ENCODE measurements at regions of chr3 and their contacts with region 1.

Region 1: DNA sequence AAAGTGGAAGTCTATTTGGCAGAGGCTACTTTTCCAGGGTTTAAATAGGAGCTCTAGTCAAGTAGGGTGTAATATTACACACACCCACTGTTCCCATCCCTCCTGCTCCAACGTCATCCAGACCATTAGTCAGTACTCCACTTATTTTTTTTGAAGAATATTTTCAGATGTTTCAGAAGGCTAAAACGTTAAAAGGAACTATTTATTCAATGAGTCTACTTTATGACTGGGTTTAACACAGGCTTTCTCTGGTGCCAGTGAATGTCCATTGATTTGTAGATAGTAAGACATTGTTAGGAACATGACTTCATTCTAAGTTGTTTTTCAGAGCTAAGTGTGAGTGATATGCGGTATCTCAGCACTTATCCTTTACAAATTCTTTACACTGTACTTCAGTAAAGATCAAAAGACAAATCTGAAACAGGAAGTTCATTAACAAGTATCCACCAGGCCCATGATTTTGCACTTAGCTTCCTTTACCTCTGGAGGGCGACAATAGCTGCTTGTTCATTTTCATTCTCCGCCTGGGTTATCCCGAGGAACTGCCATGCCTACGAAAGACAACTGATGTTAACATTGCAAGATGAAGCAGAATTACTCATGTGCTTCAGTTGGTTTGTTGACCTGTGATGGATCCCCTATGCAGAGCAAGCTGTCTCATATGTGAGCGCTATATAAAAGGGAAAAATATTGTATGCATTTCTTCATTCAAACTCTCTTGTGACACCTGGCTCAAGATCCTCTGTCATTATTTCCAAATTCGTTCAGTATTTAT is 158.7 kb downstream of the USP13 start:
- DNase-seq: peak in 1 of 2 experiments; percentile 21
- H3K4me3 ChIP-seq: no peak overlapping the region
- H3K27ac ChIP-seq: no peak overlapping the region
- H3K4me1 ChIP-seq: no peaks in the 10 kb centered on the region
- H3K27me3 ChIP-seq: no peaks in the 10 kb centered on the region
- CTCF ChIP-seq: peak; percentile 5 to 84 (median 79)
- EP300 ChIP-seq: no peak
- POLR2A ChIP-seq: no peak
- RAD21 ChIP-seq: peak; percentile 98 to 99

Region 2: DNA sequence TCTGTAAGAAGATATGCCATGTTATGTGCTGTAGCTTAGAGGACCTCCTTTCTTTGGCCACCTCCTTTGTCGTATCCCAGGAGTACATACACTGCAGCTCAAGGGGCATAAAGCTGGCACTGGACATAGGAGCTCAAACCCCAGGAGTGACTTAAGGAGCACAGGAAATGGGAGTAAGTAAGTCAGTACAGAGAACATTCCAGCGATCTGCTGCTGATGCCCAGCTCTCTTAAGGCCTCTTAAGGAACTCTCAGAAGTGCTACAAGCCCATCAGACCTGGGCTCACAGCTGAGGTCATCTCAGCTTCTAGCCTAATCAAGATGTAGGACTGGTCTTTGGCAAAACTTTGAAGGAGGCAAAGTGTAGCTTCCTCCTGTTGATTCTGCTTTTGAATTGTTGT is 270.4 kb before region 1 on chr3:
- CTCF ChIA-PET with region 1: no interaction called
- POLR2A ChIA-PET with region 1: no interaction called
- DNase-seq: no peak
- H3K4me3 ChIP-seq: no peak overlapping the region
- H3K27ac ChIP-seq: no peak overlapping the region
- H3K4me1 ChIP-seq: no peaks in the 10 kb centered on the region
- H3K27me3 ChIP-seq: no peaks in the 10 kb centered on the region
- CTCF ChIP-seq: no peak
- EP300 ChIP-seq: no peak
- POLR2A ChIP-seq: no peak
- RAD21 ChIP-seq: no peak

Region 3: DNA sequence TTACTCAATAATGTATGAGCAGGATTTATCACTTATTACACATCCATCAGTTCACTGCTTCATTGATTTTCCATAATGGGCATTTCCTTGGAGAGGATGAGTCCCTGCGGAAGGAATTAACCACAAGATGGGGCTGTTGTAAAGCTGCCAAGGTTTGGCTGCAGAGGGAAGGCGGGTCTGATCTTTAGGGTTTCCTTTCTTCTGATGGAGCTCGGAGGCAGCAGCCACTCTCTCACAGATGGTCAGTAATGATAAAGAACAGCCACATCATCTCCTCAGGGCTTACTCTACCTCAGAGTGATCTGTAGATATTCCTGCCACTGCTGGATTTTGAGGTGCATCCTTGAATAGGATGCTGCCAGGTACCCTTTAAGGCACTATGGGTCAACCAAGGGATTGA is 43.4 kb before region 1 on chr3:
- CTCF ChIA-PET with region 1: interaction called, 16 read pairs
- POLR2A ChIA-PET with region 1: no interaction called
- DNase-seq: peak in 1 of 2 experiments; percentile 58
- H3K4me3 ChIP-seq: no peak overlapping the region
- H3K27ac ChIP-seq: no peak overlapping the region
- H3K4me1 ChIP-seq: peaks cover 1 to 13% (median 3%) of the 10 kb centered on the region in 4 experiments; a peak in 6 of 7 replicates
- H3K27me3 ChIP-seq: no peaks in the 10 kb centered on the region
- CTCF ChIP-seq: peak; percentile 59 to 84 (median 72)
- EP300 ChIP-seq: no peak
- POLR2A ChIP-seq: no peak
- RAD21 ChIP-seq: peak; percentile 84 to 87

Region 4: GRCh38 chr3:179801263-179801662 is 10.2 kb before region 1 on chr3:
- CTCF ChIA-PET with region 1: interaction called, 29 read pairs
- POLR2A ChIA-PET with region 1: interaction called, 3 read pairs
- DNase-seq: no peak
- H3K4me3 ChIP-seq: no peak overlapping the region
- H3K27ac ChIP-seq: no peak overlapping the region
- H3K4me1 ChIP-seq: no peaks in the 10 kb centered on the region
- H3K27me3 ChIP-seq: no peaks in the 10 kb centered on the region
- CTCF ChIP-seq: no peak
- EP300 ChIP-seq: no peak
- POLR2A ChIP-seq: no peak
- RAD21 ChIP-seq: no peak

Region 5: DNA sequence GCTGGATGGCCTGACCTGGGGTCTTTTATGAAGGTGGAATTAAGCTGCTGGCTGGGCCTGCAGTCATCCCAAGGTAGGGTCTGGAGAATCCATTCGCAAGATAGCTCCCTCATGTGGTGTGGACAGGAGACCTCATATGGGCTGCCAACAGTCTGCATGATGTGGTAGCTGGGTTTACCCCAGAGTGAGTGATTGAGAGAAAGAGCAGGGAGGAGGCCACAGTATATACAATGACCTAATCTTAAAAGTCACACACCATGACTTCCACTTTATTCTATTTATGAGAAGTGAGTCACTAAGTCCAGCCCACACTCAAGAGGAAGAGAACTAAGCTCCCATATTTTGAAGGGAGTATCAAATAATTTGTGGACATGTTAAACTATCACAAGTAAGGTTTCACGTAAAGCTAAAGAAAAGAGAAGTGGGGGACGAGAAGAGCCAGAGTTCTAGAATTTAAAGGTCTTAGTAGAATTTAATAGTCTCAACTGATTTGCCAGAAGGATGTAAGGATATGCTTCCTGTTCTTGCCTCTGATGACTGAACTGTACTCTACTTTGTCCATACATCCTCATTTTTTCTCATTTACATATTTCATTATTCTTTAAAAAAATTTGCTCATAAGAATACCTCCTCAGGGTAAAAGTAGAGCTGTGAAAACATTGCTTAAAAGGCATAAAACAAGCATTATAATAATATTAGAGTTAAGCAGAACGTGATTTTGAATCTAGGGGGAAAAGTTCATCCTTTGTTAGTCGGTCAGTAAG is 40.8 kb after region 1 on chr3:
- CTCF ChIA-PET with region 1: interaction called, 23 read pairs
- POLR2A ChIA-PET with region 1: no interaction called
- DNase-seq: no peak
- H3K4me3 ChIP-seq: no peak overlapping the region
- H3K27ac ChIP-seq: no peak overlapping the region
- H3K4me1 ChIP-seq: no peaks in the 10 kb centered on the region
- H3K27me3 ChIP-seq: no peaks in the 10 kb centered on the region
- CTCF ChIP-seq: peak; percentile 57 to 60 (median 57)
- EP300 ChIP-seq: no peak
- POLR2A ChIP-seq: no peak
- RAD21 ChIP-seq: peak; percentile 51 to 61

Region 6: DNA sequence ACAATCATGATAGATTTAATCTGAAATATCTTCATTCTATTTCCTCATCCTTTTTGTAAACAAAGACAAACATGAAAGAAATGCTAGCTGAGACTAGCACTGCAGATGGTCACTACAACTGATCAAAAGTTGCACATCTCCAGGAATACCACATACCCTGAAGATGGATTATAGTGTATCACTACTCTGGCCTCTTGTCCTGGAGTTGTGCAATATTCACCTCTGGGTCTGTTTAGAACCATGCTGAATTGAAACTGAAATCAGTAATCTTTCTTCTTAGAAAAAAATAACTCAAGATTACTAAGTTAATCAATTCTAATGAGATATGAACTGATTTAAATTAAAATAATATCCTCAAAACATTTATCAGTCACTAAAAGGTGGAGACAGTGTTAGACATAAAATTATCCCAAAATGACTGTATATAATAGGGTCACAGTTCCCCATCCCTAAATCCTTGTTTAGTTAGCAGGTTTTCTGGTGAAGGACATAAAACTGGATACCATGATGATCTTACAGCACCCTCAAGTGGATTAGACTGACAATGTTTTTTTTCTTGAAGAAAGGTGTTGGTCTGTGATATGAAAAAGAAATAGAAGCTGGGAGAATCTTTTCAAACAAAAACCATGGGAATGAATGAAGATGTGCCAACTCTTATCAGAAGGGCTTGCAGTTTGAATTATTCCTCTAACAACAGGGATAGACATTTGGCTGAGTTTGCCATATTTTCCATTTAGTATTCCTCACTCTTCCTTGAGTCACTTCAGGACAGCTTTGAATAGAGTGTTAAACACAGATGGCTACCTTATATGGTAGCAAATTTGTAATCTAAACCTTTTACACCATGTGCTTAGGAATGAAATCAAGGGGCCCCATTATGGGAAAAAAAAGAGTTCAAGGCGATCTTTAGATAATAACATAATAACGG is 783.4 kb after region 1 on chr3:
- CTCF ChIA-PET with region 1: interaction called, 12 read pairs
- POLR2A ChIA-PET with region 1: no interaction called
- DNase-seq: no peak
- H3K4me3 ChIP-seq: no peak overlapping the region
- H3K27ac ChIP-seq: no peak overlapping the region
- H3K4me1 ChIP-seq: no peaks in the 10 kb centered on the region
- H3K27me3 ChIP-seq: no peaks in the 10 kb centered on the region
- CTCF ChIP-seq: peak in 2 of 3 experiments; percentile 40 to 44; a peak in 2 of 4 replicates
- EP300 ChIP-seq: no peak
- POLR2A ChIP-seq: no peak
- RAD21 ChIP-seq: peak; percentile 87 to 89